Activated CD8-positive, alpha-beta memory T cell treated with anti-CD3 and anti-CD28 coated beads, Interleukin-2, amount 10 ng/mL, durations not matched to agents 7 days and 5 days (primary cell): ENCODE measurements at regions of chr6 and their contacts with region 1.

Region 1: GRCh38 chr6:73388800-73389512 is 5.7 kb upstream of the DDX43 start:
- DNase-seq: peak; percentile 85
- ATAC-seq: peak; percentile 96
- H3K4me3 Mint-ChIP-seq: peak overlapping the region; percentile 77
- H3K27ac Mint-ChIP-seq: peak overlapping the region; percentile 85
- H3K4me1 Mint-ChIP-seq: peaks cover 31% of the 10 kb centered on the region
- H3K27me3 Mint-ChIP-seq: no peaks in the 10 kb centered on the region

Region 2: GRCh38 chr6:73169111-73169510 is 219.8 kb before region 1 on chr6:
- CTCF ChIA-PET with region 1: no interaction called
- DNase-seq: no peak
- ATAC-seq: no peak
- H3K4me3 Mint-ChIP-seq: no peak overlapping the region
- H3K27ac Mint-ChIP-seq: no peak overlapping the region
- H3K4me1 Mint-ChIP-seq: no peaks in the 10 kb centered on the region
- H3K27me3 Mint-ChIP-seq: no peaks in the 10 kb centered on the region

Region 3: DNA sequence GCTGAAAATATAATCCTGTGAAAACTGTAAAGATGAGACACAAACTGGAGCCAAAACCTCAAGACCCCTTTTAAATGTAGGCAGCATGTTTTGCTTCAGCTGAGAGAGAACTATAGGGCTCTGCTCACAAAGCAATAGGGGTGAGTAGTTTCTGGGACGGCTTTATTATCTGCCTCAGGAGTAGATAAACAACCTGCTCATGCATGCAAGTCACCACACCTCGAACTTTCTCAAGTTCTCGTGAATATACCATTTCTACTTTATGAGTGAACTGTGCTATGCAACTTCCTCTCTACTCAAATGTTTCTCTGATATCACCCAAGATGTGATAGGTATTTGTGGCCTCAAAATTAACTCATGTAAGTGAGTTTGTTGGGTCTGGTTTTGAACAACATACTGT is 11.7 kb before region 1 on chr6:
- CTCF ChIA-PET with region 1: interaction called, 14 read pairs
- DNase-seq: no peak
- ATAC-seq: no peak
- H3K4me3 Mint-ChIP-seq: no peak overlapping the region
- H3K27ac Mint-ChIP-seq: no peak overlapping the region
- H3K4me1 Mint-ChIP-seq: no peaks in the 10 kb centered on the region
- H3K27me3 Mint-ChIP-seq: no peaks in the 10 kb centered on the region